ENCODE measurements at regions of chr2 and their contacts with region 1.

Region 1: GRCh38 chr2:178142274-178143065 is 30.2 kb downstream of the RBM45 start:
- DNase-seq: no peak
- H3K4me3 ChIP-seq: no peak overlapping the region
- H3K27ac ChIP-seq: no peak overlapping the region
- H3K27me3 ChIP-seq: no peaks in the 10 kb centered on the region
- CTCF ChIP-seq: no peak

Region 2: DNA sequence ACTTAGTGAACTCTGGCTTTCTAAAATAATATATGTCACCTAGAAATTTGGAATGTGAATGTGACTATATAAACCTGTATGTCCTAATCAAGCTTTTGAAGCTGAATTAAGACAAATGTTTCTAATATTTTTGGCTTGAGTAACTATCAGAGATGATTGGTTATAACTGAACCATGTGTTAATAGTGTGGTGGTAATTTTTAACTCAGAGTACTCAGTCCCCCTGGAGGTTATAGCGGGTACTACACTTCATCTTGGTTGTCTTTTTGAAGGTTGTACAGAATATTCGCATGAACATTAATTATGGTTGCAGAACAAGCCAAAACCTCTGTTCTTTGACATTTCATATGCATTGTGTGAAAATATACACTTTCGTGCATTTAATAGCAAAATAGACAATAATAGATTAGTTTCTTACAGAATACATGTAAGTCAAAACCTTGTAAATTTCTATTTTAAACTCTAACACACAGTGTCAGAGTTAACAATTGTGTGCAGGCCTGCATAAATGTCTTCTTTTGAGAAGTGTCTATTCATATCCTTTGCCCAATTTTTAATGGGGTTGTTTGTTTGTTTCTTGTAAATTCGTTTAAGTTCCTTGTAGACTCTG is 137.9 kb after region 1 on chr2:
- in situ Hi-C with region 1: loop called (anchors 25 kb)
- DNase-seq: peak; percentile 79
- H3K4me3 ChIP-seq: no peak overlapping the region
- H3K27ac ChIP-seq: no peak overlapping the region
- H3K27me3 ChIP-seq: no peaks in the 10 kb centered on the region
- CTCF ChIP-seq: peak; percentile 62

Region 3: GRCh38 chr2:178414266-178415247 is 272.1 kb after region 1 on chr2:
- in situ Hi-C with region 1: loop called (anchors 25 kb)
- DNase-seq: peak; percentile 91
- H3K4me3 ChIP-seq: peak overlapping the region; percentile 68
- H3K27ac ChIP-seq: peak overlapping the region; percentile 93
- H3K27me3 ChIP-seq: no peaks in the 10 kb centered on the region
- CTCF ChIP-seq: peak; percentile 96

Region 4: DNA sequence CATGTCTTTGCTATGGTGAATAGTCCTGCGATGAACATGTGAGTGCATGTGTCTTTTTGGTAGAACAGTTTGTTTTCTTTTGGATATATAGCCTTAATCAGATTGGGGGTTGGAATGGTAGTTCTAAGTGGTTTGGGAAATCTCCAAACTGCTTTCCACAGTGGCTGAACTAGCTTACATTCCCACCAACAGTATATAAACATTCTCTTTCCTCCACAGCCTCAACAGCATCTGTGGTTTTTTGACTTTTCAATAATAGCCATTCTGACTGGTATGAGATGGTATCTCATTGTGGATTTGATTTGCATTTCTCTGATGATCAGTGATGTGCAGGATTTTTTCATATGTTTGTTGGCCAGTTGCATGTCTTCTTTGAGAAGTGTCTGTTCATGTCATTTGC is 1234.4 kb after region 1 on chr2:
- in situ Hi-C with region 1: no loop called
- DNase-seq: peak; percentile 25
- H3K4me3 ChIP-seq: no peak overlapping the region
- H3K27ac ChIP-seq: peak overlapping the region; percentile 17
- H3K27me3 ChIP-seq: no peaks in the 10 kb centered on the region
- CTCF ChIP-seq: no peak

Measured in brain microvascular endothelial cell (primary cell).